K562 (cell line): ENCODE measurements at regions of chr1 and their contacts with region 1.

Region 1: DNA sequence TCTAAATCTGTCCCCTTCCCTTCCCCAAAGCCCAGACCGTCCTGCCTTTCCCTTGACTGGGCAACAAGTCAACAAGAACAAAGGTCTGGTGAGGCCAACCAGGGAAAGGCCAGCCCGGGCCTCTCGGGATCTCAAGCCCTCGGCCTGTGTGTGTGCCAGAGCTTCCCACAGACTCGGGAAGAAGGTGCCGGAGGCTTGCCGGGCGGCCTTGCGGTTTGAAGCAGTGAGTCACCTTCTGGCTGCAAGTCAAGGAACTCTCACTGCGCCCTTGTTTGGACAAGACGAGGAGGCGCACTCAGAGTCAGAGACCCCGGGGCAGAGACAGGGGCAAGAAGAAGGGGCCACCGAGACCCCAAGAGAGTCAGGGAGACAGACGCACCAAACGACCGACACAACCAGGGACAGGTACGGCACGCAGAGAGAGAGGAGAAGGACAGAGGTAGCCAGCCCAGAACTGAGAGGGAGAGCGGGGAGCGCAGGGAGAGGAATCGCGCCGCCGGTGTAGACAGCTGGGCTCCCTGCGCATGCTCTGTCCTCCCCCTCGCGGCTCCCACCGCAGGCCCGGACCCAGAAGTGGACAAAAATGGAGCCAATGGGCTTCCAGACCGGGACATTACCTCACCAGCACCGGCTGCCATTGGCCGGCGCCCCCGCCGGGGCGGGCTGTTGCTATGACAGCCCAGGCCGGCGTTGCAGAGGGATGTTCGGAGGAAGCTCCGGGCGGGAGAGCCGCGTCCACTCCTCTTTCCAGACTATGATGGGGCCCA is 66.6 kb upstream of the LAPTM5 start:
- DNase-seq: peak; percentile 98 to 100 (median 100)
- ATAC-seq: peak; percentile 99
- H3K4me3 ChIP-seq: peak overlapping the region; percentile 44
- H3K27ac ChIP-seq: peak overlapping the region; percentile 85
- H3K4me1 ChIP-seq: peaks cover 9 to 18% of the 10 kb centered on the region in 2 experiments; a peak in 4 of 5 replicates
- H3K27me3 ChIP-seq: no peaks in the 10 kb centered on the region; a peak in 1 of 5 replicates
- CTCF ChIP-seq: 0 out of 6 replicates have a peak, but pooled peaks of 1 of the 3 experiments have one; percentile 4
- EP300 ChIP-seq: peak; percentile 43
- POLR2A ChIP-seq: peak; percentile 90
- RAD21 ChIP-seq: peak; percentile 21 to 44; a peak in 1 of 4 replicates

Region 2: GRCh38 chr1:30809514-30810263 is 14.5 kb before region 1 on chr1:
- CTCF ChIA-PET with region 1: no interaction called
- POLR2A ChIA-PET with region 1: interaction called, 13 read pairs
- in situ Hi-C with region 1: no loop called
- intact Hi-C with region 1: no loop called
- DNase-seq: peak; percentile 79 to 84 (median 80)
- ATAC-seq: peak; percentile 83
- H3K4me3 ChIP-seq: no peak overlapping the region
- H3K27ac ChIP-seq: peak overlapping the region; percentile 58
- H3K4me1 ChIP-seq: peaks cover 20 to 35% of the 10 kb centered on the region in 2 experiments
- H3K27me3 ChIP-seq: peaks cover 0 to 2% of the 10 kb centered on the region in 2 experiments; a peak in 1 of 5 replicates
- CTCF ChIP-seq: no peak
- EP300 ChIP-seq: no peak; the same call in 1 of the 2 replicates
- POLR2A ChIP-seq: no peak
- RAD21 ChIP-seq: no peak

Region 3: DNA sequence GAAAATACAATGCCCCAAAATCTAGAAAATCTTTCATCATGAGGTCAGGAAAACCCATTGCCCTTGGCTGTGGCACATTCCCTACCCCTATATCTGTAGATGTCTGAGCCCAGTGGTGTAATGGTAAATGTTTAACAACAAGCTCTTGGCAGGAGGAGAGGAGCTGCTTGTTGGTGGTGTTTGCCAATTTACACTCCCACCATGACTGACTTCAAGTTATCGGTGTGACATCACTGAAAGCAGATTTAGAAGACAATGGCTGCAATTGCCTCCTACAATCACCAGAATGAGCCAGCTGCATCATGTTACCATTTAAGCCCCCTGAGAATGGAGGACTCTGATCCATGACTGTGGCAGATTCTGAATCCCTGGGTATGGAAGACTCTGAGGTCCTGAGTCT is 13.5 kb after region 1 on chr1:
- CTCF ChIA-PET with region 1: no interaction called
- POLR2A ChIA-PET with region 1: interaction called, 13 read pairs
- in situ Hi-C with region 1: no loop called
- intact Hi-C with region 1: no loop called
- DNase-seq: no peak
- ATAC-seq: no peak
- H3K4me3 ChIP-seq: no peak overlapping the region
- H3K27ac ChIP-seq: no peak overlapping the region
- H3K4me1 ChIP-seq: no peaks in the 10 kb centered on the region; a peak in 3 of 5 replicates
- H3K27me3 ChIP-seq: peaks cover 24 to 46% of the 10 kb centered on the region in 2 experiments
- CTCF ChIP-seq: no peak
- EP300 ChIP-seq: no peak
- POLR2A ChIP-seq: no peak
- RAD21 ChIP-seq: no peak

Region 4: GRCh38 chr1:30991862-30992606 is 167.9 kb after region 1 on chr1:
- CTCF ChIA-PET with region 1: no interaction called
- POLR2A ChIA-PET with region 1: no interaction called
- in situ Hi-C with region 1: no loop called
- intact Hi-C with region 1: no loop called
- DNase-seq: no peak
- ATAC-seq: no peak; the same call in 1 of the 3 replicates
- H3K4me3 ChIP-seq: no peak overlapping the region
- H3K27ac ChIP-seq: no peak overlapping the region
- H3K4me1 ChIP-seq: peaks cover 0 to 2% of the 10 kb centered on the region in 2 experiments; a peak in 1 of 5 replicates
- H3K27me3 ChIP-seq: no peaks in the 10 kb centered on the region
- CTCF ChIP-seq: no peak
- EP300 ChIP-seq: no peak
- POLR2A ChIP-seq: no peak
- RAD21 ChIP-seq: no peak

Region 5: GRCh38 chr1:31095298-31095981 is 271.3 kb after region 1 on chr1:
- CTCF ChIA-PET with region 1: no interaction called
- POLR2A ChIA-PET with region 1: no interaction called
- in situ Hi-C with region 1: no loop called
- intact Hi-C with region 1: no loop called
- DNase-seq: no peak
- ATAC-seq: no peak
- H3K4me3 ChIP-seq: no peak overlapping the region
- H3K27ac ChIP-seq: no peak overlapping the region
- H3K4me1 ChIP-seq: peaks cover 0 to 3% of the 10 kb centered on the region in 2 experiments; a peak in 2 of 5 replicates
- H3K27me3 ChIP-seq: no peaks in the 10 kb centered on the region
- CTCF ChIP-seq: no peak
- EP300 ChIP-seq: no peak
- POLR2A ChIP-seq: no peak
- RAD21 ChIP-seq: no peak

Region 6: GRCh38 chr1:31467005-31467700 is 643.0 kb after region 1 on chr1:
- CTCF ChIA-PET with region 1: no interaction called
- POLR2A ChIA-PET with region 1: no interaction called
- in situ Hi-C with region 1: no loop called
- intact Hi-C with region 1: no loop called
- DNase-seq: no peak
- ATAC-seq: no peak
- H3K4me3 ChIP-seq: no peak overlapping the region
- H3K27ac ChIP-seq: no peak overlapping the region
- H3K4me1 ChIP-seq: peaks cover 0 to 13% of the 10 kb centered on the region in 2 experiments; a peak in 3 of 5 replicates
- H3K27me3 ChIP-seq: peaks cover 0 to 7% of the 10 kb centered on the region in 2 experiments; a peak in 1 of 5 replicates
- CTCF ChIP-seq: no peak
- EP300 ChIP-seq: no peak
- POLR2A ChIP-seq: no peak
- RAD21 ChIP-seq: no peak